Activated naive CD4-positive, alpha-beta T cell treated with anti-CD3 and anti-CD28 coated beads for 36 hours (primary cell): ENCODE measurements at regions of chr11 and their contacts with region 1.

Region 1: DNA sequence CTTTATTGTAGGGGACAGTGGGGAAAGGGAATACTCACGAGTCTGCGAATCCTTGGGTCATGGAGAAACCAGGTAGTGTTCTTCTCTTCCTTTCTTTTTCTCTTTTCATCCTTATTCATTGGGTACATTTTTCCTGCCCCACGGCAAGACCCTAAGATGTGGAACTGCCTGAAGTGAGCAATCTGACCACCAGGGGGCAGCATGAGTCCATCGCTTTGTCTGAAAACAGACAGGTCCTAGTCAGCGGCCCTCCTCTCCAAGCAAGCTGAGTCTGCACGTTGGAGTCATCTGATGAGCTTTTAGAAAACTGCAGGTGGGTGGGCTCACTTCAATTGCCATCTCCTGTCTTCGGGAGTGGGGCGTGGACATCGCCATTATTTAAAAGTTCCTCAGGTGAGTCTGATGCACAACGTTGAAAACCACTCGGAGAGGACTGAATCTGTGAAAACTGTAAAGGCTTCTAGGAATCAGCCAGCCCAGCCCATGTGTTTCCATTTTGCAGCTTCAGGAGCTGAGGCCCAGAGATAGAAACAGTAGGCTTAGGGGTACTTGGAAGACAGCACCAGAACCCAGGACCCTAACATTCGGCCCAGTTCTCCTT is 34.0 kb upstream of the FBXO3 start:
- DNase-seq: peak; percentile 92
- H3K4me3 Mint-ChIP-seq: no peak overlapping the region
- H3K27ac Mint-ChIP-seq: no peak overlapping the region
- H3K4me1 Mint-ChIP-seq: peaks cover 2% of the 10 kb centered on the region
- H3K27me3 Mint-ChIP-seq: peaks cover 7% of the 10 kb centered on the region

Region 2: DNA sequence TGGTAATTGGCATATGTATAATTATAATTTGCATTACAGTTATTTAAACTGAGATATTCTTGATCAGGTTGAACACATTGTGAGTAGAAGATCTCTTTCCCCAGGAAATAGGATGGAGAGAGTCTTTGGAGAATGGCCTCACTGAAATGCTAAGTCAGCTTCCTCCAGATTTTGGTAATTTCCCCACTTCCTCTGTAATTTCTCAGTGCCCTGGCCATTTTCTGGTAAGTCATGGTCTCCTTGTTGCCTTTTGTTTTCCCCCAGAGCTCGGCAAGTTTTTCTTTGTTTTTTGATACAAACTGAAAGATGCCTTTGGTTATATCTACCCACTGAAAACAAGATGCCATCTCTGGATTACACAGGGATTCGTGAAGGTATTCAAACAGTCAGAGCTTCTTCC is 21.3 kb before region 1 on chr11:
- CTCF ChIA-PET with region 1: interaction called, 17 read pairs
- intact Hi-C with region 1: no loop called
- DNase-seq: no peak
- H3K4me3 Mint-ChIP-seq: no peak overlapping the region
- H3K27ac Mint-ChIP-seq: no peak overlapping the region
- H3K4me1 Mint-ChIP-seq: peaks cover 4% of the 10 kb centered on the region
- H3K27me3 Mint-ChIP-seq: peaks cover 32% of the 10 kb centered on the region

Region 3: GRCh38 chr11:33819278-33819677 is 10.9 kb after region 1 on chr11:
- CTCF ChIA-PET with region 1: interaction called, 10 read pairs
- intact Hi-C with region 1: no loop called
- DNase-seq: no peak
- H3K4me3 Mint-ChIP-seq: no peak overlapping the region
- H3K27ac Mint-ChIP-seq: no peak overlapping the region
- H3K4me1 Mint-ChIP-seq: no peaks in the 10 kb centered on the region
- H3K27me3 Mint-ChIP-seq: peaks cover 15% of the 10 kb centered on the region